ENCODE measurements at regions of chr1 and their contacts with region 1.

Region 1: GRCh38 chr1:15128520-15129313 is 24.8 kb upstream of the TMEM51 start:
- DNase-seq: peak; percentile 88
- H3K4me3 ChIP-seq: no peak overlapping the region
- H3K27ac ChIP-seq: no peak overlapping the region
- H3K4me1 ChIP-seq: no peaks in the 10 kb centered on the region
- H3K27me3 ChIP-seq: peaks cover 0 to 9% (median 0%) of the 10 kb centered on the region in 7 donors
- CTCF ChIP-seq: peak; percentile 69 to 95 (median 88)
- POLR2A ChIP-seq: no peak

Region 2: DNA sequence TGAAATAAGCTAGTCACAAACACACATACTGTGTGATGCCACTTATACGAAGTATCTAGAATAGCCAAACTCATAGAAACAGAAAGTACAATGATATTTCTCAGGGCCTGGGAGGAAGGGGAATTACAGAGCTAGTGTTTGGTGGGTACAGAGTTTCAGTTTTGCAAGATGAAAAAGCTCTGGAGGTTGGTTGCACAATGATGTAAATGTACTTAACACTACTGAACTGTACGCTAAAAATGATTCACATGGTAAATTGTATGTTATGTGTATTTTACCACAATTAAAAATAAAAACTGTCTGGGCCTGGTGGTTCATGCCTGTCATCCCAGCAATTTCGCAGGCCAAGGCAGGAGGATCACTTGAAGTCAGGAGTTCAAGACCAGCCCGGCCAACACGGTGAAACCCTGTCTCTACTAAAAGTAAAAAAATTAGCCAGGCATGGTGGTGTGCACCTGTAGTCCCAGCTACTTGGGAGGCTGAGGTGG is 103.0 kb after region 1 on chr1:
- intact Hi-C with region 1: no loop called
- DNase-seq: no peak
- H3K4me3 ChIP-seq: no peak overlapping the region
- H3K27ac ChIP-seq: peak overlapping the region in 4 of 8 donors; percentile 18 to 62 (median 38)
- H3K4me1 ChIP-seq: peaks cover 0 to 9% (median 0%) of the 10 kb centered on the region in 6 donors
- H3K27me3 ChIP-seq: no peaks in the 10 kb centered on the region
- CTCF ChIP-seq: no peak
- POLR2A ChIP-seq: no peak

Region 3: DNA sequence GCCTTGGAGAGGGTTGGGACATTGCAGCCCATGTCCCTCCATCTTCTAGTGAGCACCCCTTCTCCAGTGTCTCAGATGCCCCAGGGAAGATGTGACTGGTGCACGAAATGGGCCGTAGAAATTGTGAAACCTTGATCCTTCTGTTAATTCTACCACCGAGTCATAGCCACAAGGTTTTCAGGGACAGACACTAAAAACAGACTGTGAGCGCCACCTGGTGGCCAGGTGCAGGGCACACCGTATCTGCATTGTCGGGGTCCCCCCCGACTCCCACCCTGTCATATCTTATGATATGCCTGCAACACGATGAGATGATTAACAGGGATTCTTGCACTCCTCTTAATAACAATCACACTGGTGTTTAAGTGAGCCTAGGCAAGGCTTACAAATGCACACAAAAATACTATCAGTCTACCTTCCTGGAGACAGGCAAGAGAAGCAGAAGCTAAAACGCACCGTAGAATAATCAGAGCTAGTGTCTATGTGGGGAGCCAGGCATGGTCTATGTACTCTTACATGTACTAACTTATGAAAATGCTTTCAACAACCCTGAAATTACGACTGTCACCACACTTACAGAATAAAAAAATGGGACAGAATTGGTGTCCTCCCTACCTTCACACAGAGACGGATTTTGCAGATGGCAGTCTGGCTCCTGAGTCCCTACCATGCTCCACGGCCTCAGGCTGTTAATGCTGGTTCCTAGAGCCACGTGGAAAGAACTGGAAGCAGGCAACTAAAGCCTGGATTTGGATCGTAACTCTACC is 176.2 kb after region 1 on chr1:
- intact Hi-C with region 1: loop called (anchors 2 kb)
- DNase-seq: peak; percentile 86
- H3K4me3 ChIP-seq: peak overlapping the region in 1 of 8 donors; percentile 16
- H3K27ac ChIP-seq: no peak overlapping the region
- H3K4me1 ChIP-seq: peaks cover 0 to 8% (median 0%) of the 10 kb centered on the region in 6 donors
- H3K27me3 ChIP-seq: peaks cover 0 to 10% (median 0%) of the 10 kb centered on the region in 7 donors
- CTCF ChIP-seq: peak; percentile 55 to 88 (median 81)
- POLR2A ChIP-seq: no peak